Activated T-helper 1 cell treated with anti-CD3 and anti-CD28 coated beads, Interleukin-12 subunit alpha, Interleukin-12 subunit beta, Interleukin-2, Interleukin-4 antibody, amounts not matched to agents 30 ng/mL and 10 ng/mL and 1 ng/mL, durations not matched to agents 14 hours and 24 hours and 36 hours (primary cell): ENCODE measurements at regions of chr1 and their contacts with region 1.

Region 1: GRCh38 chr1:6343506-6344405 is 49.8 kb downstream of the ACOT7 start:
- DNase-seq: peak; percentile 58
- H3K4me3 Mint-ChIP-seq: no peak overlapping the region
- H3K27ac Mint-ChIP-seq: no peak overlapping the region
- H3K4me1 Mint-ChIP-seq: peaks cover 18% of the 10 kb centered on the region
- H3K27me3 Mint-ChIP-seq: peaks cover 1% of the 10 kb centered on the region

Region 2: DNA sequence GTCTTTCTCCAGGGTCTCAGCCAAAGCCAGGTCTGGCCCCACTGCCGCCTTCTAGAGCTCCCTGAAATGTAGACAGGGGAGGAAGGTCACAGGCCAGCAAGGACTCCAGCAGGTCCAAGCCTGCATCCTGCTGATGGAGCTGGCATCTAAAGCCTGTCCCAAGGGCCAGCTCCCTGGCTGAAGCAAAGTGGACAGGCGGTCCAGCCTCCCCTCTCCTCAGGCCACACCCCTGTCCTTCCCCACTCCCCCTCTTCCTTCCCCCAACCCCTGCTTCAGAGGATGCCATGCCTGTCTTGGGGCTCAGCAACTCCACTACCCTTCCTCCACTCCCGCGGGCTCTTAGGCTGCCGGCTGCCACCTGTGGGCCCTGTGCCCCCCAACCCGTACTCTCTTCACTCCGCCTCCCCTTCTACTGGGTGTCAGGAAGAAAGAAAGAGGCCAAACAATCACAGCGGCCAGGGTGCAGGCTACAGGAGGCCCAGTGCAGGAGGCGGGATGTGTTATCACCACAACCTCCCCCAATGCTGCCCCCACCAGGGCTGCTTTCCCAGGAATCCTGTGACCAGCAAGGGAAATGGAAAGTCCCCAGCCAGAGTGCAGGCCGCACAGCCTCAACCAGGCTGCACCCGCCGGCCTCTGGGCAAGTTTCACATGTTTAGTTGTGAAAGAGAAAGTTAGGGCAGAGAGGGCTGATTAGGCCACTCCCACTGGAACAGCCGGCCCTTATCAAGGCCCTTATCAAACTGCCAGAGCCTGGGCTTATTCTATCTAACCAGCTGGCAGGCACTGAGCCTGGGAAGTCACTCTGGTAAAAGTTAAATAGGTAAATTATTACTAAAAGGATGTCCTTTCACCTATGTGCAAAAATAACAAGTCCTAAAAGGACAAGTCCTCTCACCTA is 15.7 kb after region 1 on chr1:
- intact Hi-C with region 1: loop called (anchors 1 kb)
- DNase-seq: peak; percentile 57
- H3K4me3 Mint-ChIP-seq: peak overlapping the region; percentile 64
- H3K27ac Mint-ChIP-seq: peak overlapping the region; percentile 89
- H3K4me1 Mint-ChIP-seq: peaks cover 46% of the 10 kb centered on the region
- H3K27me3 Mint-ChIP-seq: no peaks in the 10 kb centered on the region